Activated CD8-positive, alpha-beta memory T cell treated with anti-CD3 and anti-CD28 coated beads, Interleukin-2, amount 10 ng/mL, durations not matched to agents 7 days and 5 days (primary cell): ENCODE measurements at regions of chr13 and their contacts with region 1.

Region 1: DNA sequence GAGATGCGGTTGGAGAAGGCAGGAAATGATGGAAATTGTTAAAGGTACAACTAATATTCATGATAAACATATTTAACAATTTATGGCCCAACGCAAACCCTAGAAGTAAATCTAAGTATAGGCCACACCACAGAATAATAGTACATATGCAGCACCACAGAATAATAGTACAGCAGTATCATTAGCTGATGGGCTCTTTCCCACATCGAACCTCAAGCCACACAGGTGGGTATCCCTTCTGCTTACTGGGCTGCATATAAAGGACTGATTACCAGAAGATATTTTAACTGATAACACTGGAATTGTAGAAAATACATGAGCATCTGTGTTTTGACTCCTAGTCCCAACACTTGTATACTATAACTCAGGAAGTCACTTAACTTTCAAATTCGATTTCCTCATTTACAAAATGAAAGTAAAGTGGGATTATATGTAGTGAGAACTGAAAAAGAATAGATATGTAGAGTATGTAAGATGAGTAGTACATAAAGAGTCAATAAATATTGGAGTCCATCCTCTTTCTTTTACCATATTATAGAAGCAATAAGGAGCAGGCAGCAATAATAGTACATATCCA is 91.5 kb downstream of the TSC22D1 start:
- DNase-seq: no peak
- ATAC-seq: peak; percentile 82
- H3K4me3 Mint-ChIP-seq: peak overlapping the region; percentile 58
- H3K27ac Mint-ChIP-seq: peak overlapping the region; percentile 77
- H3K4me1 Mint-ChIP-seq: peaks cover 20% of the 10 kb centered on the region
- H3K27me3 Mint-ChIP-seq: no peaks in the 10 kb centered on the region

Region 2: DNA sequence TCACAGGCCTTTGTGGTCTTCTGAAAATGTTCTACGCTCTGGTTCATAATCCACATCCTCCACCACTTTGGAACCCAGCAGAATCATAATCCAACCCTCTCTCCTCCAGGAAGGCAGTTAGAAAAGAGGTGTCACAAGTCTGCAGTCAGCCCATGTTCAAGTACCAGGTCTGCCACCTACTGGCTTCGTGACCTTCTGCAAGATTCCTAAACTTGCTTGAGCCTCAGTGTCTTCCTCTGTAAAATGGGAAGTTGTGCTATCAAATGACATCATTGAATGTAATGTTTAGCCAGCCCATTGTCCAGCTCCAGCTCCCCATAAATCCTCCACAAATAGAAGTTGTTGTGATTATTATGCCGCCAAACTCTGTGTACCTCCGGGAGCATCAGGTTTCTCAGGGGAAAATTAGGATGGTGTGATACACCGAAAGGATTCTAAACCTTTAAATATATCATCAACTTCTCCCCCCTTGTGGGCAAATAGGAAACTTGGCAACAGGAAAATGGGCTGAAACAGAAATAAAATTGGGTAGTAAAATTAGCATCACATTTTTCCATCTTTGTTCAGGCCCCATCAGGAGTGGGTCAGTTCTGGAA is 394.9 kb after region 1 on chr13:
- CTCF ChIA-PET with region 1: interaction called, 25 read pairs
- DNase-seq: peak; percentile 44
- ATAC-seq: no peak
- H3K4me3 Mint-ChIP-seq: no peak overlapping the region
- H3K27ac Mint-ChIP-seq: no peak overlapping the region
- H3K4me1 Mint-ChIP-seq: no peaks in the 10 kb centered on the region
- H3K27me3 Mint-ChIP-seq: peaks cover 7% of the 10 kb centered on the region

Region 3: GRCh38 chr13:44917589-44918325 is 433.1 kb after region 1 on chr13:
- CTCF ChIA-PET with region 1: interaction called, 30 read pairs
- DNase-seq: peak; percentile 98
- ATAC-seq: peak; percentile 86
- H3K4me3 Mint-ChIP-seq: no peak overlapping the region
- H3K27ac Mint-ChIP-seq: no peak overlapping the region
- H3K4me1 Mint-ChIP-seq: no peaks in the 10 kb centered on the region
- H3K27me3 Mint-ChIP-seq: no peaks in the 10 kb centered on the region

Region 4: DNA sequence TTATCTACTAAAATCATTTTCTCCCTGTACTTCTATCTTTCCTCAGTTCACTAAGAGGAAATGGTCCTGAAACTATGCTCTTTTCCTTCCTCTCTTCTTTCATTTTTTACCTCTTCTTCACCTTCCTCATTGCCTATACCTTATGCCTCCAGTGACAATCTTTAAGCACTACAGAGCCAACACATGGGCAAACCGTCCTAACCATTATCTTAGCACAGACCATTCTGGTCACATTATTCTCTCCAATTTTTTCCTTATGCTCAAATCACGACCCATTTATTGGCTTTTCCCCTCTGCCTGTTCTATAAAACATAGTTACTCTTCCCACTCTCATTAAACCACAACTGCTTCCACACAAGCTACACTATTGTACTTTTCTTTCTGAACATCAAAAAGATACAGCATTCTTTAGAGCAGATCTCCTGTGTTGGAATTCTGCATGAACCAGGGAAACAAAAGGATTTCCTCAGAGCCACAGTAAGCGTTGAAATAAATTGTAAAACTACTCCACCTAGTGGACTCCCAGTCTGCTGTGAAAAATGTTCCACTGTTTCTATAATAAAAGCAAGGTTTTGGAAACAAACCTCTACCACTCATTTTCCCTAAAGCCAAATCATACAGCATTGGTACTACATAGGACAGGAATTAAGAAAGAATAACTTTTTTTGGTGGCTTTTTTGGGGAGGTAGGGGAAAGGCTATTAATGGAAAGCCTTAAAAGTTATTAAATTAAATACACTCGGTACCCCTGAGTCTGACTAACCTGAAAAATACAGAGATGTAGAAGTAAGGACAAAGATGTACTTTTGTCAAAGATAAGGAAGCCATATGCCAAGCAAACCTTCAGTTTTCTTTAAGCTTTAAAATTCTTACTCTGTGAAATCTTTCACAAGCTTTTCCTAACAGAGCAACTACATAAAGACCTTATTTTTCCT is 485.2 kb after region 1 on chr13:
- CTCF ChIA-PET with region 1: interaction called, 15 read pairs
- DNase-seq: no peak
- ATAC-seq: no peak
- H3K4me3 Mint-ChIP-seq: no peak overlapping the region
- H3K27ac Mint-ChIP-seq: no peak overlapping the region
- H3K4me1 Mint-ChIP-seq: no peaks in the 10 kb centered on the region
- H3K27me3 Mint-ChIP-seq: no peaks in the 10 kb centered on the region

Region 5: DNA sequence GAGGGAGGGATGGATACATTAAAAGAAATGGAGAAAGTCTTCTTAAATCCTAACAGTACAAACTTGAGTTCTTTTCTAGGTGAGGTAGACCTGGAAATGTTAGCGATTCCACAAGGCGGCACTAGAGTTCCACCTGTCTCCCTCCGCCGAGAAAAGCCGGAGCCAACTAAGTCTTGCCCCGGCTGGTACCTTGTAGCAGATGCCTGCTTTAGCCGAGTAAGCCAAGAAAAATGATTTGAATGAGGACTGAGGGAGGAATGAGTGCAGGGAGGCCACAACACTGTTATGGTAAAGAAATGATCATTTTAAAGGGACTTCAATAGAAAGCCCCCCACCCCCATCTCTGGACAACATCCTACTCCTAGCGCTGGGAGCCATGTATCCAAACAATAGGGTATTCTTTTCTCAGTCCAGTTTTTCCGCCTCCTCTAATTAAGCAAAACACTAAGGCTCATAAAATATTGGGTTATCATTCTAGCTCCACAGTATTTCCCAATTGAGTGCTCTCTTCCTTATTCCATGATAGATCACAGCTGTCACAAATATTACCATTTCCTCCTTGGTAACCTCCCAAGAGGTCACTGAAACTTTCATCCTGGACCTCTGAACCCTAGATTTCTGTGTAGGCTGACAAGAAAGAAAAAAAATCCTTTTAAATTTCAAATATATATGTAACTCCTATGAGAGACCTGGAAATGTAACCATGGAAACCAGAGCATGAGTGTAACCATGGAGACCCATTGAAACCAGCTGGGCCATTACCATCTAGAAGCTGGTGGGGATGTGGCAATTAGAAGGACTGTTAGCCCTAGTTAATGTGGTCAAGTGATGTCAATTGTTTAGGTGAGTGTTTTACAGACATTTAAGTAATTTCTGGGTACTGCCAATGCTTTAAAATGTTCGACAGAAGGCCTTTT is 563.0 kb after region 1 on chr13:
- CTCF ChIA-PET with region 1: interaction called, 10 read pairs
- DNase-seq: peak; percentile 84
- ATAC-seq: peak; percentile 89
- H3K4me3 Mint-ChIP-seq: peak overlapping the region; percentile 70
- H3K27ac Mint-ChIP-seq: no peak overlapping the region
- H3K4me1 Mint-ChIP-seq: peaks cover 29% of the 10 kb centered on the region
- H3K27me3 Mint-ChIP-seq: peaks cover 61% of the 10 kb centered on the region